Activated CD4-positive, alpha-beta T cell treated with anti-CD3 and anti-CD28 coated beads for 36 hours (primary cell): ENCODE measurements at regions of chr9 and their contacts with region 1.

Region 1: DNA sequence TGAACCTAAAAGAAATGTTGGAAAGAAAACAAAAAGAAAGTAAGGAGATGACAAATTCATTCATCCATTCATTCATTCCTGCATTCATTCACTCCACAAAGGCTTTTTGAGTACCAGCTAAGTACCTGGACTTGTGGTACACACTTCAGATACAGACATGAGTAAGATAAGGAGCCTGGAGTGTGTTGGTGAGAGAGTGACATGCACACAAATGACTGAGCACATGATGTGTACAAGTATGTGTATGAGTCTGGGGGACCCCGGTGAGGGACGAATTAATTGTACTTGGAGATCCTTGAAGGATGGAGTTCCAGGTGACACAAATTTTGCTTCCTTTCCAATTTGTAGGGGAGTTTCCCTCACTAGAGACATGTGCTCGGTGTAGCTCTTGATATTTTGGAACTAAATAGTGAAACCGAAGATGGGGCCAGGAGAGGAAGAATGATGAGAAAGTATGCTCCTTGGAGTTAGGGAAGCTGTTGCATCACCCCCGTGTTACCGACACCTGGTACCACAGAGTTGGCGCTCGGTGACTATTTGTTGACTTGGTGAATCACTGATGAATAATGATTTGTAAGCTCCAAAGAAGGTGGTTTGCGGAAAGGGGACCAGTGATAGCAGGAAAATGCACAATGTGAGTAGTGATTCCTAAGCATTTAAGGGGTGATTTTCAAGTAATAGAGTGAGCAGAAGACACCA is 509.8 kb downstream of the CCDC171 start:
- DNase-seq: peak; percentile 34
- ATAC-seq: peak; percentile 73
- H3K4me3 Mint-ChIP-seq: no peak overlapping the region
- H3K27ac Mint-ChIP-seq: no peak overlapping the region
- H3K4me1 Mint-ChIP-seq: peaks cover 40% of the 10 kb centered on the region
- H3K27me3 Mint-ChIP-seq: no peaks in the 10 kb centered on the region

Region 2: GRCh38 chr9:16044579-16044881 is 18.2 kb before region 1 on chr9:
- CTCF ChIA-PET with region 1: no interaction called
- POLR2A ChIA-PET with region 1: no interaction called
- intact Hi-C with region 1: loop called in 1 of 2 experiments (anchors 2 kb)
- DNase-seq: no peak
- ATAC-seq: no peak
- H3K4me3 Mint-ChIP-seq: no peak overlapping the region
- H3K27ac Mint-ChIP-seq: no peak overlapping the region
- H3K4me1 Mint-ChIP-seq: no peaks in the 10 kb centered on the region
- H3K27me3 Mint-ChIP-seq: no peaks in the 10 kb centered on the region

Region 3: GRCh38 chr9:16126042-16126441 is 63.4 kb after region 1 on chr9:
- CTCF ChIA-PET with region 1: no interaction called
- POLR2A ChIA-PET with region 1: no interaction called
- intact Hi-C with region 1: loop called in 1 of 2 experiments (anchors 2 kb)
- DNase-seq: no peak
- ATAC-seq: peak; percentile 74
- H3K4me3 Mint-ChIP-seq: no peak overlapping the region
- H3K27ac Mint-ChIP-seq: no peak overlapping the region
- H3K4me1 Mint-ChIP-seq: peaks cover 13% of the 10 kb centered on the region
- H3K27me3 Mint-ChIP-seq: peaks cover 1% of the 10 kb centered on the region

Region 4: DNA sequence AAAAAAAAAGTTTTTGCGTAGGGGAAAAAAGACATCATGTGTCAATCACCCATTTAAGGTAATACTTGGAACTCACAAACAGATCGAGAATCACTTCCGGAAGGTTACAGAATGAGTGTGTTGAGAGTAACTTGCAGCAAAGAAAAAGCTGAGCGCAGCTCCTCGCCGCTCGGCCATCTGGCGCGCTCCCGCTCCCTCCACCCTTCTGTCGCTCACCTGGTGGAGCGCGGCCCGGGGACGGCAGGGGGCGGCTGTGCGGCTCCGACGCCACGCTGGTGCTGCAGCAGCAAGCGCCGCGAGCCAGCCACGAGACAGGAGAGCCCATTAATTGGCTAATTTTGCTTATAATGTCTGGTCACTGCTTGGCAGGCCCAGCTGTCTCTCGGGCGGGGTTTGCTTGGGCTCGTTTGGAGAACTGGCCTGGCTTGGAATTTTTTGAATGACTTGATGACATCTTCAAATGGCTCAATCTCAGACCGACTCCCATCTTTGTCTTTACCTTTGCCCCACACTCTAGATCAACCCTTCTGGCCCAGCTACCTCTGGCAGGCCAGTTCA is 91.9 kb after region 1 on chr9:
- CTCF ChIA-PET with region 1: no interaction called
- POLR2A ChIA-PET with region 1: no interaction called
- intact Hi-C with region 1: loop called in 1 of 2 experiments (anchors 5 kb)
- DNase-seq: peak; percentile 78
- ATAC-seq: peak; percentile 99
- H3K4me3 Mint-ChIP-seq: peak overlapping the region; percentile 40
- H3K27ac Mint-ChIP-seq: peak overlapping the region; percentile 55
- H3K4me1 Mint-ChIP-seq: peaks cover 10% of the 10 kb centered on the region
- H3K27me3 Mint-ChIP-seq: peaks cover 8% of the 10 kb centered on the region